Prostate gland (tissue), 2 donors: ENCODE measurements at regions of chr17 and their contacts with region 1.

Region 1: DNA sequence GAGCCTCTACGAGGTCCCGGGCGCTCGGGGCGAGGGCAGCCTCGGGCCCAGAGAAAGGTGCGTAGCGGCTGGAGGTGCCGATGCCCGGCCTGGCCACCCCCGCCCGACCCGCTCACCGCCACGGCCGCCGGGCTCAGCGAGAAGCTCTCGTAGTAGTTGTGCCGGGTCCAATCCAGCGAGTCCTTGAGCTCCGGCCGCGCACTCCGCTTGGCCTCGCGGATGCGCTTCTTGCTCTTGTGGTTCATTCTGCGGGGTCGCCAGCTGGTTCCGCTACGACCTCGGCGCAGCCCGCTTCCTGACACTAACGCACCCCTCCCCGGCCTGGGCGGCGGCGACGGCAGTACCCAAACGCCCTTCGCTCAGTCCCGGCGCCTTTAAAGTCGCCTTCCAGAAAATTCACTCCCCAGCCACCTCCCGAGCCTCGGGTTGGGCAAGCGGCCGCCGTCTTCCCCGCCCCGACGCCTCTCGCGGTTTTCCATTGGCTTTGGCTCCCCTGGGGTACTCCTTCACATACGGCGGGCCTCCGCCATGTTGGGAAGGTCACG is at the start of gene JMJD6:
- DNase-seq: peak; percentile 97
- H3K4me3 ChIP-seq: peak within 1 kb of the TSS; percentile 94 to 98
- H3K27ac ChIP-seq: peak within 1 kb of the TSS; percentile 99 to 100
- H3K4me1 ChIP-seq: peaks cover 21% of the 10 kb centered on the region
- H3K27me3 ChIP-seq: no peaks in the 10 kb centered on the region
- CTCF ChIP-seq: no peak
- POLR2A ChIP-seq: peak; percentile 96
- total RNA-seq, gene JMJD6: 17.7 to 40.5 TPM

Region 2: GRCh38 chr17:76687308-76688164 is 38.8 kb before region 1 on chr17:
- intact Hi-C with region 1: loop called (anchors 5 kb)
- DNase-seq: no peak
- H3K4me3 ChIP-seq: no peak overlapping the region
- H3K27ac ChIP-seq: peak overlapping the region; percentile 62 to 80
- H3K4me1 ChIP-seq: no peaks in the 10 kb centered on the region
- H3K27me3 ChIP-seq: no peaks in the 10 kb centered on the region
- CTCF ChIP-seq: no peak
- POLR2A ChIP-seq: no peak

Region 3: GRCh38 chr17:76709077-76709950 is 17.0 kb before region 1 on chr17:
- intact Hi-C with region 1: loop called (anchors 1 kb)
- DNase-seq: peak; percentile 44
- H3K4me3 ChIP-seq: peak overlapping the region; percentile 50 to 54
- H3K27ac ChIP-seq: peak overlapping the region; percentile 86
- H3K4me1 ChIP-seq: peaks cover 8% of the 10 kb centered on the region
- H3K27me3 ChIP-seq: no peaks in the 10 kb centered on the region
- CTCF ChIP-seq: no peak
- POLR2A ChIP-seq: no peak